Activated CD4-positive, alpha-beta T cell treated with anti-CD3 and anti-CD28 coated beads, Interleukin-2, amount 10 ng/mL, durations not matched to agents 24 days and 14 days (primary cell): ENCODE measurements at regions of chr18 and their contacts with region 1.

Region 1: DNA sequence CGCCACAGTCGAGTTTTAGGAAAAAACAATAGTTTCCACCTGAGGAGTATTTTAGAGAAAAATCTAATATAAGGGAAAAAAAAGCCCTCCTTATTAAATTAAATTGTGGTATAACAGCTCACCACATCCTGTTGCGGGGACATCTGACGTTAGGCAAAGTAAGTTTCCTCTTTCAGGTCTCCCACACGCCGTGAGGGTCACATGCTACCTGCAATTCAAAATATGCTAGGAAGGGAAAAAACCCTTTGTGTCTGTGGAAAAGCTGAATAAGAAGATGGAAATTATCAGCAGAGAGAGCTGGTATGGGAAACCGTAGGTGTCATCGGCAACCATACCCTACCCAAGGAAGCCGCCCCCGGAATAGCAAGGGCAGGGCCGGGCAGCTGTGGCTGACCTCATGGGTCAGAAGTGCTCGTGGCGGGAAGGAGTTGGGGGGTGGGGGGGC is 128.0 kb downstream of the NFATC1 start:
- DNase-seq: peak; percentile 91
- H3K4me3 Mint-ChIP-seq: peak overlapping the region; percentile 76
- H3K27ac Mint-ChIP-seq: peak overlapping the region; percentile 92
- H3K4me1 Mint-ChIP-seq: peaks cover 54% of the 10 kb centered on the region
- H3K27me3 Mint-ChIP-seq: no peaks in the 10 kb centered on the region

Region 2: DNA sequence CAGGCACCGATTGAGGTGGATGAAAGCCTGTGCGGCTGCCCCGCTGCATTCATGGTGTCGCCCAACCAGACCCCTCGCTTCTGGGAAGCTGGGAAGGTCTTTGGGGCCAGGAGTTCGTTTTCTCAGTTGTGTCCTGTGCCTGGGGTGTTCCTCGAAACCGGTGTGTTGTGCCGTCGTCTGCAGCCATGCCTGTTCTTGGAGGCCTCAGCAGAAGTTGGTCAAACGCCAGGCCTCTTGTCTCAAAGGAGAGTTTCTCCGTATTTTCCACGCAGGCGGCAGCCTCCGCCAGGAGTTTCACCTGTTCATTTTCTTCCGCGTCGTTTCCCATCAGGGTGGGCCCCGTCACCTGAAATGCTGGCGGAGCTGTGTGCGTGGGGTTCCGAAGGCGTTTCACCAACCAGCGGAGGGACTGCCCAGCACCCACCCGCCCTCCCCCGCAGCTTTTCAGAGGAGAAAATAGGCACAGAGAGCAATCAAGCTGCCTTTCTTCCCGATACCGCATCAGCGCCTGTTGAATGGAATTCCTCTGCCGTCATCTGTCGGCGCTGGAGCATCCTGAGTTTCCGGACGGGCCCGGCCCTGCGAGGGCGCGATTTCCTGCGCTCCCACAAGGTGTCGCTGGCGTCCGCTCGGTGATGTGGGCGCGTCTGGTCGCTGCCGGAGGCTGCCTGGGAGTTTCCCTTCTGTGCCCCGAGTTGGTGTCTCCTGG is 145.1 kb before region 1 on chr18:
- intact Hi-C with region 1: loop called (anchors 1 kb)
- DNase-seq: peak; percentile 95
- H3K4me3 Mint-ChIP-seq: peak overlapping the region; percentile 37
- H3K27ac Mint-ChIP-seq: no peak overlapping the region
- H3K4me1 Mint-ChIP-seq: peaks cover 9% of the 10 kb centered on the region
- H3K27me3 Mint-ChIP-seq: no peaks in the 10 kb centered on the region

Region 3: GRCh38 chr18:79393635-79394533 is 129.9 kb before region 1 on chr18:
- intact Hi-C with region 1: loop called (anchors 1 kb)
- DNase-seq: peak; percentile 83
- H3K4me3 Mint-ChIP-seq: peak overlapping the region; percentile 87
- H3K27ac Mint-ChIP-seq: peak overlapping the region; percentile 92
- H3K4me1 Mint-ChIP-seq: peaks cover 19% of the 10 kb centered on the region
- H3K27me3 Mint-ChIP-seq: peaks cover 27% of the 10 kb centered on the region

Region 4: GRCh38 chr18:79399275-79400081 is 124.3 kb before region 1 on chr18:
- intact Hi-C with region 1: loop called (anchors 1 kb)
- DNase-seq: peak; percentile 84
- H3K4me3 Mint-ChIP-seq: peak overlapping the region; percentile 94
- H3K27ac Mint-ChIP-seq: peak overlapping the region; percentile 96
- H3K4me1 Mint-ChIP-seq: peaks cover 41% of the 10 kb centered on the region
- H3K27me3 Mint-ChIP-seq: no peaks in the 10 kb centered on the region

Region 5: DNA sequence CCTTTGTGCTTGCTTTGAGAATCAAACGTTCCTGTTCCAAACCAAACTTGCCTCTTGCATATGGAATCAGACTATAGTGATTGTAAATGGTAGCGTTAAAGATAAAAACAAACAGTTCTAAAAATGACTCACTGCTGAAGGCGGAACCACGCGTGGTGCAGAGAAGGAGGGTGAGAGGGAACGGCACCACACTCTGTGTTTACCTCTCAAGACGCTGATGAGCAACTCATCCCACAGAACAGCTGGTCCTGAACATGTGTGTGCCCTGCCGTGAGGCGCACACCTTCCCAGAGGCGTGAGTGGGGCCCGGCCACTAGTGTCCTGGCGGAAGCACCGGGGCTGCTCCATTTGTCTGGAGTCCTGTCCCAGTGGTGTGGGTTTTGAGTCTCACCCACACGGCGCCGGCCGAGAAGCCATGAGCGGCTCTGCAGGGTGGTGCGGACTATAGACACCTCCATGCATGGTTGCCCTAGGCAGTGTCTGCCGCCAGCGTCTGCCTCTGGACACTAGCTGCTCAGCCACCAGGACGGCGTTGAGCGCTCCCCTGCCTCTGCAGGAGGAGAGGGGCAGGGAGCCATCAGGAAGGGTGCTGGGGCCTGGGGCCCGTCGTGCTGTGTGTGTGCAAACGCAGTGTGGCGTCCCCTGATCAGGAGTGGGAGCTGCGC is 75.9 kb before region 1 on chr18:
- intact Hi-C with region 1: loop called (anchors 5 kb)
- DNase-seq: no peak
- H3K4me3 Mint-ChIP-seq: no peak overlapping the region
- H3K27ac Mint-ChIP-seq: peak overlapping the region; percentile 15
- H3K4me1 Mint-ChIP-seq: peaks cover 8% of the 10 kb centered on the region
- H3K27me3 Mint-ChIP-seq: no peaks in the 10 kb centered on the region

Region 6: DNA sequence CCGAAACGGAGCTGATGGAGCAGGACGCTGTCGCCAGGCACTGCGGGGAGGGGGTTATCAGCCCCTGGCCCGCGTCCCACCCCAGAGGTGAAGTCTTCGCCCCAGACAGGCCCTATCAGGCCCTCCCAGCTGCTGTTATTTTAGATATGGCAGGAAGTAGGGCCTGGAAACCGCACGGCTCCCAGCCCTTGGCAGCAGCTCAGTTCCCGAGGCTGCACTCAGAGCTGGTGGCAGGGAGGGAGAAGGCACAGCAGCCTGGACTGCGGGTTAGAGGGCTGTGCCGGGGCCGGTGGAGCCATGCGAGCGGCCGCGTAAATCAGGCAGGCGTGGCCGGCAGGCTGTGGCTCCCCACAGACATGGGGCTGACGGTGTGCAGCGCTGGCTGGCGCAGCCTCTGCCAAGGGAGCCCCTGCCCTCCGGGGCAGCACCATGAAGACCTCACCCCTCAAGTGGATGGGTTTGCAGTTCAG is 16.6 kb before region 1 on chr18:
- intact Hi-C with region 1: loop called (anchors 2 kb)
- DNase-seq: peak; percentile 77
- H3K4me3 Mint-ChIP-seq: peak overlapping the region; percentile 73
- H3K27ac Mint-ChIP-seq: peak overlapping the region; percentile 87
- H3K4me1 Mint-ChIP-seq: peaks cover 49% of the 10 kb centered on the region
- H3K27me3 Mint-ChIP-seq: no peaks in the 10 kb centered on the region

Region 7: GRCh38 chr18:79679111-79679872 is 155.5 kb after region 1 on chr18 and contains the start of gene CTDP1:
- intact Hi-C with region 1: loop called (anchors 1 kb)
- DNase-seq: peak; percentile 99
- H3K4me3 Mint-ChIP-seq: peak within 1 kb of the TSS; percentile 93
- H3K27ac Mint-ChIP-seq: peak within 1 kb of the TSS; percentile 99
- H3K4me1 Mint-ChIP-seq: peaks cover 56% of the 10 kb centered on the region
- H3K27me3 Mint-ChIP-seq: peaks cover 4% of the 10 kb centered on the region
- total RNA-seq, gene CTDP1: 41.2 and 45.5 TPM in 2 replicates

Region 8: GRCh38 chr18:79884963-79885751 is 361.4 kb after region 1 on chr18:
- intact Hi-C with region 1: no loop called
- DNase-seq: no peak
- H3K4me3 Mint-ChIP-seq: no peak overlapping the region
- H3K27ac Mint-ChIP-seq: no peak overlapping the region
- H3K4me1 Mint-ChIP-seq: peaks cover under 1% of the 10 kb centered on the region
- H3K27me3 Mint-ChIP-seq: no peaks in the 10 kb centered on the region